Endothelial cell of umbilical vein (primary cell): ENCODE measurements at regions of chr2 and their contacts with region 1.

Region 1: GRCh38 chr2:20015472-20016083 is 3.1 kb upstream of the MATN3 start:
- DNase-seq: peak; percentile 63
- H3K4me3 ChIP-seq: no peak overlapping the region
- H3K27ac ChIP-seq: no peak overlapping the region
- H3K4me1 ChIP-seq: peaks cover 13% of the 10 kb centered on the region
- H3K27me3 ChIP-seq: peaks cover 0 to 3% of the 10 kb centered on the region in 2 experiments
- CTCF ChIP-seq: peak; percentile 29 to 44
- POLR2A ChIP-seq: no peak

Region 2: GRCh38 chr2:18194161-18194560 is 1821.4 kb before region 1 on chr2:
- CTCF ChIA-PET with region 1: no interaction called
- POLR2A ChIA-PET with region 1: no interaction called
- dilution Hi-C with region 1: no loop called
- intact Hi-C with region 1: no loop called
- DNase-seq: no peak
- H3K4me3 ChIP-seq: no peak overlapping the region
- H3K27ac ChIP-seq: no peak overlapping the region
- H3K4me1 ChIP-seq: no peaks in the 10 kb centered on the region
- H3K27me3 ChIP-seq: peaks cover 0 to 6% of the 10 kb centered on the region in 2 experiments
- CTCF ChIP-seq: no peak
- POLR2A ChIP-seq: no peak

Region 3: GRCh38 chr2:19901442-19902215 is 113.9 kb before region 1 on chr2 and contains the start of gene TTC32:
- CTCF ChIA-PET with region 1: interaction called, 5 read pairs
- POLR2A ChIA-PET with region 1: no interaction called
- dilution Hi-C with region 1: no loop called
- intact Hi-C with region 1: loop called (anchors 2 kb)
- DNase-seq: peak; percentile 97
- H3K4me3 ChIP-seq: peak within 1 kb of the TSS; percentile 28 to 97 (median 86)
- H3K27ac ChIP-seq: peak within 1 kb of the TSS; percentile 90
- H3K4me1 ChIP-seq: peaks cover 25% of the 10 kb centered on the region
- H3K27me3 ChIP-seq: no peaks in the 10 kb centered on the region
- CTCF ChIP-seq: peak in 1 of 2 donors; percentile 12
- POLR2A ChIP-seq: peak; percentile 89
- total RNA-seq, gene TTC32: 8.8 and 13.8 TPM in 2 replicates

Region 4: GRCh38 chr2:19971691-19972090 is 43.9 kb before region 1 on chr2:
- CTCF ChIA-PET with region 1: interaction called, 8 read pairs
- POLR2A ChIA-PET with region 1: no interaction called
- dilution Hi-C with region 1: no loop called
- intact Hi-C with region 1: loop called (anchors 5 kb)
- DNase-seq: peak; percentile 77
- H3K4me3 ChIP-seq: no peak overlapping the region
- H3K27ac ChIP-seq: peak overlapping the region; percentile 83
- H3K4me1 ChIP-seq: peaks cover 13% of the 10 kb centered on the region
- H3K27me3 ChIP-seq: no peaks in the 10 kb centered on the region
- CTCF ChIP-seq: no peak
- POLR2A ChIP-seq: no peak

Region 5: DNA sequence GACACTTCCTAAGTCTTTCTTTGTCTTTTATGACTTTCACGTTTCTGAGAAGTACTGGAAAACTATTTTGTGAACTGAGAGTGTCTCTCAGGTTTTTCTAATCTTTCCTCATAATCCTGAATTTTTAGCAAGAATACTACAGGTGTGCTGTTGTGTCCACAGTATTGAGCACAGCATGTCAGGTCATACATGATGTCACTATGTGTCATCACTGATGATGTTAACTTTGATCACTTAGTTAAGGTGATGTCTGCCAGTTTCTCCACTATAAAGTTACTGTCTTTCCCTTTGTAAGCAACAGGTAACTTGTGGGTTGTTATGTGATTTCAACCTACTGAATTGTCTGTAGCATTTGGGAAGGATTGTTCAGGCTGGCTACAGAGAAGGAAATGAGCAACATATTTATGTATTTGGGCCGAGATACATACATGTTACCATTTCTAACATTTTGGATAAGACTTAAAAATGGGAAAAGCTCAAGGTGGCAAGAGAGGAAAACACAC is 14.2 kb before region 1 on chr2:
- CTCF ChIA-PET with region 1: interaction called, 19 read pairs
- POLR2A ChIA-PET with region 1: no interaction called
- dilution Hi-C with region 1: no loop called
- intact Hi-C with region 1: no loop called
- DNase-seq: no peak
- H3K4me3 ChIP-seq: no peak overlapping the region
- H3K27ac ChIP-seq: no peak overlapping the region
- H3K4me1 ChIP-seq: no peaks in the 10 kb centered on the region
- H3K27me3 ChIP-seq: no peaks in the 10 kb centered on the region
- CTCF ChIP-seq: no peak
- POLR2A ChIP-seq: no peak

Region 6: GRCh38 chr2:20051532-20052228 is 36.1 kb after region 1 on chr2 and contains the start of gene LAPTM4A:
- CTCF ChIA-PET with region 1: interaction called, 146 read pairs
- POLR2A ChIA-PET with region 1: interaction called, 14 read pairs
- dilution Hi-C with region 1: no loop called
- intact Hi-C with region 1: loop called (anchors 1 kb)
- DNase-seq: peak; percentile 100
- H3K4me3 ChIP-seq: peak within 1 kb of the TSS; percentile 51 to 97 (median 83)
- H3K27ac ChIP-seq: peak within 1 kb of the TSS; percentile 94
- H3K4me1 ChIP-seq: peaks cover 34% of the 10 kb centered on the region
- H3K27me3 ChIP-seq: peaks cover 10% of the 10 kb centered on the region in 2 experiments
- CTCF ChIP-seq: no peak
- POLR2A ChIP-seq: peak; percentile 38
- total RNA-seq, gene LAPTM4A: 154 and 155 TPM in 2 replicates

Region 7: DNA sequence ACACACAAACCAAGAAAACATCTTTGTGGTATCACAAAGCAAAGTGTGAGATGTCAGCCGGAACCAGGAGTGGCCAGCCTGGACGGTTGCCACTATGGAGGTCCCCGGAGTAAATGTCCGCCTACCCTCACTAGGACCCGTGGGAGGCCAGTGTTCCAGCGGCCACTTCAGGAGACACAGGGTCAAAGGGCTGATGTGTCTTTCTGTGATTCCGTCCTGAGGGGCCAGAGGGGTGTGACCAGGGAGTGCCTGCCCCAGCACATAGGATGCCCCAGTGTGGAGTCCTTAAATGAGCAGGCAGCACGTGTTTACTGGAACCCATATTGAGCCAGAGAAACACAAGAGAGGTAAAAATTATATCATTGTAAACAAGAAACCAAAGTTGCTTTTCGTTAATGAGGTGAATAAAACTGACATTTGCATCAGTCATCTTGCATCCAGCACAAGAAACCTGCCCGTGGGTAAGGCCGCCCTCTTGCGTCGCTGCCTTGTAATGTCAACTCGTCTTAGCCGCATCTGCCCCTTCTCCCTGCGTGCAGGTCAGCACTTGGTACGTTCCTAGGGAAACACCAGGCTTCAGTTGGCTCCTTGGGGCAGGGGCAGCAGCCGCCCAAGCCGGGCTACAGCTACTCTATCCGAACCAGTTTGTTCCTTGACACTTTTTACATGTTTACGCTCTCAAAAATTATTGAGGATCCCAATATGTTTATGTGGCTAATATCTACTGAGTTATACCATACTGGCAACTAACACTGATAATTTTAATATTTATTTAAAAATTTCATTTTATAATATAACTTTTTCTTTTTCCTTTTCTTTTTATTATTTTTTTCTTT is 82.5 kb after region 1 on chr2:
- CTCF ChIA-PET with region 1: interaction called, 259 read pairs
- POLR2A ChIA-PET with region 1: interaction called, 4 read pairs
- dilution Hi-C with region 1: no loop called
- intact Hi-C with region 1: loop called (anchors 1 kb)
- DNase-seq: peak; percentile 94
- H3K4me3 ChIP-seq: no peak overlapping the region
- H3K27ac ChIP-seq: no peak overlapping the region
- H3K4me1 ChIP-seq: peaks cover 4% of the 10 kb centered on the region
- H3K27me3 ChIP-seq: no peaks in the 10 kb centered on the region
- CTCF ChIP-seq: peak; percentile 86 to 93
- POLR2A ChIP-seq: no peak

Region 8: DNA sequence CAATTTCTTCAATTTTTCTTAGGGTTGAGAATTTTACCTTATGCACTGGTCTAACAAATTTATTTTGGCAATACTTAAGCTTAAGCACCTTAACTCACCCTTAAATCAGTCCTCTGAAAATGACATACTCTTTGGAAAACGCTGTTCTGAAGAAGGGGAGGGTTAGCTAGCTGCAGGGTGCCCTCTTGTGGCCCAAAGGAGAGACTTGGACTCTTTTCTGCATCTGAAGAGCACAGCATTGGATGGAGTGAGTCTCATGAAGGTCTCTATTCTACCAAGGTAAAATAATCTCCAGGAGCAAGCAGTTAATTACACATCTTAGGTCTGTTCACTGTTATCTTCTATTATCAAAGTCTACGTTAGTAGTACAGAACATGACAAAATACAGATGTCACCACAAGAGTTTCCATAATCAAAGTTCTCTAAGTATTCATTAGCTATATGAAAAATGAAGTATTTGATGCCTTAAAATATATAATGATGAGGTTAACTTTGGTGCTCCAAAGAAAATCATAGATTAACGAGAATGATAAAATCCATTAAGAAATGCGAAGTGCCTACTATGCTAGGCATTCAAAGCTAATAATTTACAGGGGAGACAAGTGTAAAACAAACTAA is 310.7 kb after region 1 on chr2:
- CTCF ChIA-PET with region 1: interaction called, 10 read pairs
- POLR2A ChIA-PET with region 1: interaction called, 11 read pairs
- dilution Hi-C with region 1: no loop called
- intact Hi-C with region 1: no loop called
- DNase-seq: peak; percentile 72
- H3K4me3 ChIP-seq: no peak overlapping the region
- H3K27ac ChIP-seq: no peak overlapping the region
- H3K4me1 ChIP-seq: peaks cover 23% of the 10 kb centered on the region
- H3K27me3 ChIP-seq: no peaks in the 10 kb centered on the region
- CTCF ChIP-seq: peak; percentile 83 to 84
- POLR2A ChIP-seq: no peak